GM12878 (cell line): ENCODE measurements at regions of chr6 and their contacts with region 1.

Region 1: GRCh38 chr6:145633981-145634627 is 101.2 kb downstream of the EPM2A start:
- DNase-seq: peak; percentile 27
- ATAC-seq: peak; percentile 98
- H3K4me3 ChIP-seq: no peak overlapping the region
- H3K27ac ChIP-seq: no peak overlapping the region
- H3K4me1 ChIP-seq: no peaks in the 10 kb centered on the region
- H3K27me3 ChIP-seq: no peaks in the 10 kb centered on the region
- CTCF ChIP-seq: peak; percentile 82 to 87 (median 83)
- EP300 ChIP-seq: no peak
- POLR2A ChIP-seq: no peak
- RAD21 ChIP-seq: peak; percentile 89

Region 2: GRCh38 chr6:145214570-145214969 is 419.5 kb before region 1 on chr6:
- CTCF ChIA-PET with region 1: interaction called, 3 read pairs
- POLR2A ChIA-PET with region 1: no interaction called
- RAD21 ChIA-PET with region 1: interaction called, 3 read pairs
- SMC1A ChIA-PET with region 1: interaction called, 6 read pairs
- in situ Hi-C with region 1: no loop called
- intact Hi-C with region 1: loop called (anchors 5 kb)
- DNase-seq: no peak
- ATAC-seq: peak; percentile 55
- H3K4me3 ChIP-seq: no peak overlapping the region
- H3K27ac ChIP-seq: no peak overlapping the region
- H3K4me1 ChIP-seq: peaks cover 15% of the 10 kb centered on the region
- H3K27me3 ChIP-seq: no peaks in the 10 kb centered on the region
- CTCF ChIP-seq: peak; percentile 32 to 43 (median 37); a peak in 4 of 6 replicates
- EP300 ChIP-seq: no peak
- POLR2A ChIP-seq: no peak
- RAD21 ChIP-seq: peak; percentile 72

Region 3: DNA sequence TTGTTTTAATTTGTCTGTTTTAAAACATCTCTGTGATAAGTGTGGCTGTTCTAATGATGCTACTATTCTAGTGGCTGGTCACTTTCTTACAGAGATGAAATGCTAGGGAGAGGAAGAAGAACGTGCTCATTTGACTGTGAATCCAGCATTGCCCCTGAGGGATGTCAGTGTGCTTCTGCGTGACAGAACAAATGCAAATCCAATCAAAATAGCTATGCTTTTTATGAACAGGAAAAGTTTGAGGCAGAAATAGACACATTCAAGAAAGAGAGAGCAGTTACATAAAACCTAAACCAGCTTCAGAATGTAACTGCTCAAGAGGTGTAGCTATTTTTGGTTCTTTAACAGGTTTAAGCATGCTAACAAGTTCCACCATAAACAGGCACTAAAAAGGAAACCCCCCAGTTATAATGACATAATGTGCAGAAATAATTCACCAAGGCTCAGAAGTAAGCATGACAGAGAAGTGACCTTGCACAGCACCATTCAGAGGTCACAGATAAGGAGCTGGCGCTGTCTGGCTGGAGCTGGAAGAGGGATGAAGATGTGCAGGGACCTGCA is 284.1 kb before region 1 on chr6:
- CTCF ChIA-PET with region 1: interaction called, 36 read pairs
- POLR2A ChIA-PET with region 1: no interaction called
- RAD21 ChIA-PET with region 1: interaction called, 17 read pairs
- SMC1A ChIA-PET with region 1: interaction called, 15 read pairs
- in situ Hi-C with region 1: no loop called
- intact Hi-C with region 1: loop called (anchors 10 kb)
- DNase-seq: peak; percentile 72
- ATAC-seq: peak; percentile 82
- H3K4me3 ChIP-seq: peak overlapping the region; percentile 39; the same call in 1 of the 2 replicates
- H3K27ac ChIP-seq: peak overlapping the region; percentile 71
- H3K4me1 ChIP-seq: peaks cover 15% of the 10 kb centered on the region
- H3K27me3 ChIP-seq: no peaks in the 10 kb centered on the region
- CTCF ChIP-seq: no peak
- EP300 ChIP-seq: peak; percentile 67 to 81
- POLR2A ChIP-seq: peak; percentile 37; the same call in 1 of the 2 replicates
- RAD21 ChIP-seq: no peak

Region 4: DNA sequence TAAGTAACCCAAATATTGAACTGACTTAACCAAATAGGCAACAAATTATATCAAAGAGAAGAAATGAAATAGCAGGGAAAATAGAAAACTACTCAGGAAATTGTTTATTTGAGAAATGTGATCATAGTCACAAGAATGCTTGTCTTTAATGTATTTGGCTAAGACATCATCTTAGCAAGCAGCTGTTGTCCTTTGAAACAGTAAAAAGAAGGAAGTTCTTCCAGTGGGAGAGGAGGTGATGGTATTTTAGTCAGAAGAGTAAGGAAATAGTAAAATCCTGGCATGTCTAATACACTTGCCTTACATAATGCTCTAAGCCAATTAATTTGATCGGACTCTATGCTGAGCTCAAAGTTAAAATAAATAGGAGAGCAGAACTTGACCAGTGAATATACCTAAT is 25.3 kb before region 1 on chr6:
- CTCF ChIA-PET with region 1: interaction called, 16 read pairs
- POLR2A ChIA-PET with region 1: no interaction called
- RAD21 ChIA-PET with region 1: interaction called, 4 read pairs
- SMC1A ChIA-PET with region 1: interaction called, 4 read pairs
- in situ Hi-C with region 1: no loop called
- intact Hi-C with region 1: no loop called
- DNase-seq: no peak
- ATAC-seq: no peak
- H3K4me3 ChIP-seq: no peak overlapping the region
- H3K27ac ChIP-seq: no peak overlapping the region
- H3K4me1 ChIP-seq: no peaks in the 10 kb centered on the region
- H3K27me3 ChIP-seq: no peaks in the 10 kb centered on the region; a peak in 1 of 4 replicates
- CTCF ChIP-seq: no peak
- EP300 ChIP-seq: no peak
- POLR2A ChIP-seq: no peak
- RAD21 ChIP-seq: no peak

Region 5: GRCh38 chr6:145621776-145622175 is 12.3 kb before region 1 on chr6:
- CTCF ChIA-PET with region 1: interaction called, 24 read pairs
- POLR2A ChIA-PET with region 1: no interaction called
- RAD21 ChIA-PET with region 1: interaction called, 3 read pairs
- SMC1A ChIA-PET with region 1: interaction called, 11 read pairs
- in situ Hi-C with region 1: no loop called
- intact Hi-C with region 1: no loop called
- DNase-seq: no peak
- ATAC-seq: peak; percentile 59
- H3K4me3 ChIP-seq: no peak overlapping the region
- H3K27ac ChIP-seq: no peak overlapping the region
- H3K4me1 ChIP-seq: no peaks in the 10 kb centered on the region; the same call in 1 of the 2 replicates
- H3K27me3 ChIP-seq: no peaks in the 10 kb centered on the region
- CTCF ChIP-seq: no peak
- EP300 ChIP-seq: no peak
- POLR2A ChIP-seq: no peak
- RAD21 ChIP-seq: no peak

Region 6: DNA sequence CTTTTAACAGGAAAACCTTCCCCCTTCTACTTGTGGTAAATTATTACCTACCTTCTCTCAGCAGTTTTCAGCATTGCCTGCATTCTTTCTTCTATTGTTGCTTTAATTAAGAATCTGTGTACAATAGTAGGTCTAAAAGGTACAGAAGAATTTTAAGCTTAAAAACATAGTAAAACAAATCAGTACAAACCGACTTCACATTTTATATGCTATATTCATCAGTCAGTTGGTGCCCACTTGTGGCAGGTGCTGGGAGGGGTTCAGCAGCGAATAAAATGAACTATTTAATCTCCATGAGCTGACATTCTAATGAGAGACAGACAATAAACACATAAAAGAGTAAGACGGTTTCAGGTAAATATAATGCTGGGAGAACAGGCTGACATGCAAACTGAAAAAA is 253.9 kb after region 1 on chr6:
- CTCF ChIA-PET with region 1: interaction called, 4 read pairs
- POLR2A ChIA-PET with region 1: no interaction called
- RAD21 ChIA-PET with region 1: interaction called, 10 read pairs
- SMC1A ChIA-PET with region 1: interaction called, 3 read pairs
- in situ Hi-C with region 1: no loop called
- intact Hi-C with region 1: no loop called
- DNase-seq: no peak
- ATAC-seq: peak; percentile 70
- H3K4me3 ChIP-seq: no peak overlapping the region
- H3K27ac ChIP-seq: no peak overlapping the region
- H3K4me1 ChIP-seq: no peaks in the 10 kb centered on the region
- H3K27me3 ChIP-seq: no peaks in the 10 kb centered on the region
- CTCF ChIP-seq: peak; percentile 56 to 65 (median 62); a peak in 5 of 6 replicates
- EP300 ChIP-seq: no peak
- POLR2A ChIP-seq: no peak
- RAD21 ChIP-seq: peak; percentile 77